Endothelial cell of umbilical vein (primary cell): ENCODE measurements at regions of chr4 and their contacts with region 1.

Region 1: DNA sequence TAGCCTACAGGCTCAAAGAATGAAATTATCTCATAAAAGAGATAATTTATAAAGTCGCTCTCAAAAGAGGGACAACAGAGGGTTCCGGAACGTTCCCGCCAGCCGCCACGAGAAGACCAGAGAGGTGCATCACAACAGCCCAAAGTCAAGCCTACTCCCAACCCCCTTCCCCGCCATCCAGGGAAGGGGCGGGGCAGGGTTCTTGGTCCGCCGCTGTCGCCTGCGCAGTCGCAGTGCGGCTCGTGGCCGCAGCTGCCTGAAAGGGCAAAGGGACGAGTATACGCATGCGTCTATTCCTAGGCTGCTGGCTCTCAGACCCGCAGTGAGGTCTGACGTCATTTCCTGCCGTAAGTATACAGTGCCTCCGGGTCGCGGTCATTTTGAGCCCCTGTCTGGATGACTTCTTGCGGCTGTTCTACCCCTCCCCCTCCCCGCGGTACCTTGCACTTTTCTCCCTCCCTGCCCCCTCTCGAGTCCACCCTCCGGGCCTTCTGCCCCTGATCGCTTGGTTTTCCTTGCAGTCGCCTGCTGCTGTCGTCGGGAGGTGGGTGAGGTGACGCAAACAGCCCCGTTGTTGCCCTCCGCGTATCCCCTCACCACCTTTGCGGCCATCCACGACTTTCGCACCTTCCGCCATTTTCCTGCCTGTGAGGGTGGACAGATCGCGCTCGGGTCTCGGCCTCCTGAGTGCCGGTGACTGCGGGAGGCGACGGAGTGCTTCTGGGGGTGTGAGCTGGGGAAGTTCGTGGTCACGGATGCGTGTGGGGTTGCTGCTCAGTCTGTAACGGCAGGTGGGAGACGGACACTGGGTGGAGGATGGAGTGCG is at the start of gene OCIAD1:
- DNase-seq: peak; percentile 99
- H3K4me3 ChIP-seq: peak within 1 kb of the TSS; percentile 64 to 96 (median 66)
- H3K27ac ChIP-seq: peak within 1 kb of the TSS; percentile 95
- H3K4me1 ChIP-seq: peaks cover 10% of the 10 kb centered on the region
- H3K27me3 ChIP-seq: no peaks in the 10 kb centered on the region
- CTCF ChIP-seq: no peak
- POLR2A ChIP-seq: peak; percentile 81
- total RNA-seq, gene OCIAD1: 99.9 and 101 TPM in 2 replicates

Region 2: DNA sequence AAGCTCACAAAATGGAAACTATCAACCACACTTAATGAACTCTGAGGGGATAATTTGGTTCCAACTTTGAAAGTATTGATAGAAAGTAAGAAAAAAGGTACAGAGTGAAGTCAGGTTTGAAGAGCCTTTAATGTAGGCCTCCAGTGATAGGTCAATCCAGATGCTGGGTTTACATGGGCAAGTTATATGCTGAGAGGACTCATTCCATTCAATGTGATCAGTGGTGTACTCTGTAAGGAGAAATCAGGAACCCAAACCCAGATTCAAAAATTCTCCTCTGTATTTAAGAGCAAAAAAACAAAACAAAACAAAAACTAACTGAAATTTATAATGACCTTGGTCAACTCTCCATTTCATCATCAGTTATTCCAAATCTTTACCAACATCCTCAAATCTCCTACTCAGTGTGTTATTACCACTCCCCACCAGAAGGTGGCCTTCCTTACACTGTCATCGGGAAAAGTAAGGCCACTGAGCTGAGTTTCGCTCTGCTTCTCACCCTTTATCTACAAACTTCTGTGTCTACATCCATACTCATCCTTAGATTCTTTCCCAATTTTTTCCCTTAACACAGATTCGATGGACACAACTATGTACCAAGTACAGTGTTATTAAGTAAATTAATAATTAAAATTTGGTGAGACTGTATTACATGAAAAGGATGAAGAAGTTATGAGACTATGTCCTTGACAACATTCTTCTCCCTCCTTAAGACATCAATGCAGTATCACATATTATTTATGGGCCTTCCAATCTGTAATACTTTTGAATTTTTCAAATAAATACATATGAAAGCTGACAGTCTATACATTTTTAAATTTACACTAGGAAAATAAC is 252.6 kb before region 1 on chr4:
- CTCF ChIA-PET with region 1: interaction called, 6 read pairs
- POLR2A ChIA-PET with region 1: no interaction called
- dilution Hi-C with region 1: no loop called
- intact Hi-C with region 1: loop called (anchors 1 kb)
- DNase-seq: peak; percentile 77
- H3K4me3 ChIP-seq: no peak overlapping the region
- H3K27ac ChIP-seq: no peak overlapping the region
- H3K4me1 ChIP-seq: no peaks in the 10 kb centered on the region
- H3K27me3 ChIP-seq: no peaks in the 10 kb centered on the region
- CTCF ChIP-seq: peak; percentile 60 to 69
- POLR2A ChIP-seq: no peak

Region 3: DNA sequence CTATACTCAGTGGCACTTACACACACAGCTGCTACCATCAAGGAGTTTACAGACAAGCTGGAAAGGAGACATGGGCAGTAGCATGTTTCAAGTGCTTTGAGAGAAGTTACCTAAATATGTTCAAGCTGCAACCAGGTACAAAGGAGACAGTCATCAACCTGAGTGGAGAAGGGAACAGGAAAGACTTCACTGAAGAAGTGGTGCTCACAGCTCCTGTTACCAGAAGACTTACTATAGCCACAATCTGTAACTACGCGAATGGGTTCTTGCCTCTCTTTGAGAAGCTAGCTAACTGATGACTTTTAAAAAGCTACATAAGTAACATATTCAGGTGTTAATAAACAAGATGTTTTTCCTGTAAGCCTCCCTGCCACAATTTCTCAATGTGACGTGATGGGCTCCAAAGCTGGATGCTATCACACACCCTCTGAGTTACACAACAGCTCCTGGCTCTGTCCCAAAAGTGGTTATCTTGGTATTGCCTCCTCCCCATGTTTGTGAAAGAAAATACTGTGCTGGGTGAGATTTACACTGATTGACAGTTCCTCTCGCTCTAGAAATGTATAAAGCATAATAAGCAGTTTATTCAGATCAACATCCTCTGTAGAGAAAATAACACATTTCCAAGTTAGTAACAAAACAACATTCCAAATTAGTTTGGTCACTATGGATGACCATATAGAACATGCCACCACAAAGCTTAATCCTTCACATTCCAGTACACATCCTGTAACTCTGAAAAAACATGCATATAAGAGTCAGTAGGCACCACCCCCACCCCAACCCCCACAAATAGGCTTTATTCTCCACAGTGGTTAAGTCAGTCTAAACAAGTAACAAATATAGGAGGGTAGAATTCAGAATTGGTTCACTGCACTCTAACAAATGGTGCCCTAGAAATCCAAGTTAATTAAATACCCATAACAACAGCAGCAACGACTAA is 132.6 kb before region 1 on chr4:
- CTCF ChIA-PET with region 1: no interaction called
- POLR2A ChIA-PET with region 1: no interaction called
- dilution Hi-C with region 1: no loop called
- intact Hi-C with region 1: loop called (anchors 10 kb)
- DNase-seq: peak; percentile 87
- H3K4me3 ChIP-seq: no peak overlapping the region
- H3K27ac ChIP-seq: peak overlapping the region; percentile 85
- H3K4me1 ChIP-seq: peaks cover 28% of the 10 kb centered on the region
- H3K27me3 ChIP-seq: no peaks in the 10 kb centered on the region
- CTCF ChIP-seq: no peak
- POLR2A ChIP-seq: no peak

Region 4: GRCh38 chr4:48898733-48899431 is 68.0 kb after region 1 on chr4:
- CTCF ChIA-PET with region 1: no interaction called
- POLR2A ChIA-PET with region 1: no interaction called
- dilution Hi-C with region 1: no loop called
- intact Hi-C with region 1: loop called (anchors 2 kb)
- DNase-seq: peak; percentile 78
- H3K4me3 ChIP-seq: no peak overlapping the region
- H3K27ac ChIP-seq: peak overlapping the region; percentile 10
- H3K4me1 ChIP-seq: peaks cover 19% of the 10 kb centered on the region
- H3K27me3 ChIP-seq: no peaks in the 10 kb centered on the region
- CTCF ChIP-seq: no peak
- POLR2A ChIP-seq: peak; percentile 26

Region 5: GRCh38 chr4:48963042-48963679 is 132.2 kb after region 1 on chr4:
- CTCF ChIA-PET with region 1: no interaction called
- POLR2A ChIA-PET with region 1: no interaction called
- dilution Hi-C with region 1: loop called (anchors 25 kb)
- intact Hi-C with region 1: loop called (anchors 1 kb)
- DNase-seq: peak; percentile 90
- H3K4me3 ChIP-seq: no peak overlapping the region
- H3K27ac ChIP-seq: no peak overlapping the region
- H3K4me1 ChIP-seq: no peaks in the 10 kb centered on the region
- H3K27me3 ChIP-seq: peaks cover 5 to 12% of the 10 kb centered on the region in 2 experiments
- CTCF ChIP-seq: peak; percentile 88 to 99
- POLR2A ChIP-seq: no peak